ENCODE measurements at regions of chr11 and their contacts with region 1.

Region 1: GRCh38 chr11:65111744-65112414 is at the start of gene TM7SF2:
- DNase-seq: peak; percentile 94
- ATAC-seq: peak; percentile 81
- H3K4me3 ChIP-seq: peak within 1 kb of the TSS; percentile 16 to 92 (median 68)
- H3K4me3 Mint-ChIP-seq: peak within 1 kb of the TSS; percentile 89
- H3K27ac ChIP-seq: peak within 1 kb of the TSS; percentile 44 to 54
- H3K27ac Mint-ChIP-seq: peak within 1 kb of the TSS; percentile 84
- H3K4me1 ChIP-seq: peaks cover 28 to 51% of the 10 kb centered on the region in 2 donors
- H3K4me1 Mint-ChIP-seq: peaks cover 51% of the 10 kb centered on the region
- H3K27me3 ChIP-seq: no peaks in the 10 kb centered on the region
- H3K27me3 Mint-ChIP-seq: no peaks in the 10 kb centered on the region
- CTCF ChIP-seq: no peak
- total RNA-seq, gene TM7SF2: 28.5 and 35.3 TPM in 2 replicates

Region 2: GRCh38 chr11:65040847-65041621 is 70.8 kb before region 1 on chr11 and contains the start of gene SAC3D1:
- CTCF ChIA-PET with region 1: interaction called, 3 read pairs
- POLR2A ChIA-PET with region 1: interaction called, 6 read pairs
- intact Hi-C with region 1: loop called (anchors 2 kb)
- DNase-seq: peak; percentile 92
- ATAC-seq: peak; percentile 94
- H3K4me3 ChIP-seq: peak within 1 kb of the TSS; percentile 50 to 80 (median 75)
- H3K4me3 Mint-ChIP-seq: peak within 1 kb of the TSS; percentile 95
- H3K27ac ChIP-seq: peak within 1 kb of the TSS; percentile 67 to 72
- H3K27ac Mint-ChIP-seq: peak within 1 kb of the TSS; percentile 96
- H3K4me1 ChIP-seq: peaks cover 7 to 22% of the 10 kb centered on the region in 2 donors
- H3K4me1 Mint-ChIP-seq: peaks cover 14% of the 10 kb centered on the region
- H3K27me3 ChIP-seq: no peaks in the 10 kb centered on the region
- H3K27me3 Mint-ChIP-seq: no peaks in the 10 kb centered on the region
- CTCF ChIP-seq: no peak
- total RNA-seq, gene SAC3D1: 5.9 and 7.5 TPM in 2 replicates

Region 3: GRCh38 chr11:65128148-65129145 is 16.6 kb after region 1 on chr11:
- CTCF ChIA-PET with region 1: interaction called, 41 read pairs
- POLR2A ChIA-PET with region 1: interaction called, 160 read pairs
- intact Hi-C with region 1: loop called (anchors 1 kb)
- DNase-seq: no peak
- ATAC-seq: no peak
- H3K4me3 ChIP-seq: no peak overlapping the region
- H3K4me3 Mint-ChIP-seq: no peak overlapping the region
- H3K27ac ChIP-seq: no peak overlapping the region
- H3K27ac Mint-ChIP-seq: peak overlapping the region; percentile 56
- H3K4me1 ChIP-seq: peaks cover 32 to 58% of the 10 kb centered on the region in 2 donors
- H3K4me1 Mint-ChIP-seq: peaks cover 52% of the 10 kb centered on the region
- H3K27me3 ChIP-seq: no peaks in the 10 kb centered on the region
- H3K27me3 Mint-ChIP-seq: no peaks in the 10 kb centered on the region
- CTCF ChIP-seq: no peak

Region 4: GRCh38 chr11:65180877-65181568 is 69.1 kb after region 1 on chr11:
- CTCF ChIA-PET with region 1: interaction called, 118 read pairs
- POLR2A ChIA-PET with region 1: interaction called, 27 read pairs
- intact Hi-C with region 1: loop called (anchors 1 kb)
- DNase-seq: peak; percentile 87
- ATAC-seq: peak; percentile 84
- H3K4me3 ChIP-seq: peak overlapping the region; percentile 58 to 91 (median 80)
- H3K4me3 Mint-ChIP-seq: peak overlapping the region; percentile 97
- H3K27ac ChIP-seq: peak overlapping the region; percentile 58 to 64
- H3K27ac Mint-ChIP-seq: peak overlapping the region; percentile 96
- H3K4me1 ChIP-seq: peaks cover 16 to 24% of the 10 kb centered on the region in 2 donors
- H3K4me1 Mint-ChIP-seq: peaks cover 24% of the 10 kb centered on the region
- H3K27me3 ChIP-seq: no peaks in the 10 kb centered on the region
- H3K27me3 Mint-ChIP-seq: no peaks in the 10 kb centered on the region
- CTCF ChIP-seq: peak; percentile 61

Region 5: GRCh38 chr11:65314501-65315203 is 202.8 kb after region 1 on chr11 and contains the start of gene CDC42EP2:
- CTCF ChIA-PET with region 1: interaction called, 6 read pairs
- POLR2A ChIA-PET with region 1: no interaction called
- intact Hi-C with region 1: loop called (anchors 2 kb)
- DNase-seq: peak; percentile 85
- ATAC-seq: peak; percentile 96
- H3K4me3 ChIP-seq: peak within 1 kb of the TSS; percentile 40 to 85 (median 81)
- H3K4me3 Mint-ChIP-seq: peak within 1 kb of the TSS; percentile 84
- H3K27ac ChIP-seq: peak within 1 kb of the TSS in 1 of 2 donors; percentile 51
- H3K27ac Mint-ChIP-seq: no peak within 1 kb of the TSS
- H3K4me1 ChIP-seq: peaks cover 8 to 17% of the 10 kb centered on the region in 2 donors
- H3K4me1 Mint-ChIP-seq: peaks cover 10% of the 10 kb centered on the region
- H3K27me3 ChIP-seq: peaks cover 0 to 12% (median 5%) of the 10 kb centered on the region in 4 experiments
- H3K27me3 Mint-ChIP-seq: peaks cover 9% of the 10 kb centered on the region
- CTCF ChIP-seq: no peak
- total RNA-seq, gene CDC42EP2: 1.1 and 1.5 TPM in 2 replicates

Region 6: GRCh38 chr11:65779851-65780577 is 668.1 kb after region 1 on chr11:
- CTCF ChIA-PET with region 1: no interaction called
- POLR2A ChIA-PET with region 1: no interaction called
- intact Hi-C with region 1: no loop called
- DNase-seq: peak; percentile 87
- ATAC-seq: peak; percentile 65
- H3K4me3 ChIP-seq: peak overlapping the region; percentile 42 to 81 (median 74)
- H3K4me3 Mint-ChIP-seq: peak overlapping the region; percentile 89
- H3K27ac ChIP-seq: peak overlapping the region; percentile 16 to 79
- H3K27ac Mint-ChIP-seq: peak overlapping the region; percentile 83
- H3K4me1 ChIP-seq: peaks cover 12 to 18% of the 10 kb centered on the region in 2 donors
- H3K4me1 Mint-ChIP-seq: peaks cover 15% of the 10 kb centered on the region
- H3K27me3 ChIP-seq: no peaks in the 10 kb centered on the region
- H3K27me3 Mint-ChIP-seq: no peaks in the 10 kb centered on the region
- CTCF ChIP-seq: peak; percentile 100